ENCODE measurements at regions of chr11 and their contacts with region 1.

Region 1: GRCh38 chr11:18115360-18116127 is 9.7 kb upstream of the SAAL1 start:
- DNase-seq: peak; percentile 78

Region 2: GRCh38 chr11:18027475-18027874 is 88.1 kb before region 1 on chr11:
- CTCF ChIA-PET with region 1: no interaction called
- POLR2A ChIA-PET with region 1: no interaction called
- DNase-seq: no peak

Region 3: GRCh38 chr11:18203723-18204122 is 88.2 kb after region 1 on chr11:
- CTCF ChIA-PET with region 1: interaction called, 19 read pairs
- POLR2A ChIA-PET with region 1: no interaction called
- DNase-seq: peak; percentile 69

Region 4: DNA sequence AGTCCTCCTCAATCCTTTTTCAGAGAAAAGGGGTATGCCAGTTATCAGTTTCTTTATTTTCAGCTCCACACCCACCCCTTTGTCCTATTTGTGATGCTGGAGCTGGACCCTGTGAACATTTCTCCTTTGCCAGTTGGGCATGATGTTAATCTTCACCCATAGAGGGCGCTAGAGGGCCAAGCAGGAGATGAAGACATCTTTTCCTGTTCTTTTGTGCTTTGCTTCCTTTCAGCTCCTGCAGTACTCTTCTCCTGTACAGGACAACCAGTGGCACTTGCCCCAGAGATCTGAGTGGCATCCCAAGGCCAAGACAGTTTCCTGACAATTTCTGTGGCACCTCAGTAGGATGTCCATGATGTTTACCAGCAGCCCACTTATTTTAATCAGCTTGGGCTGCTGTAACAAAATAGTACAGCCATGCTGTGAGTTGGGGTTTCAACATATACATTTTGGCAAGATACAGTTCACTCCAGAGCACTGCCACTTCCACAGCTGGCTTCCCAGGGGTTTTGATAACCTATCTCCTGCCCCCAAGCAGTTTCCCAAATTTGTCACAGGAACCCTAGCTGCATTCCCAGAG is 128.3 kb after region 1 on chr11:
- CTCF ChIA-PET with region 1: interaction called, 17 read pairs
- POLR2A ChIA-PET with region 1: no interaction called
- DNase-seq: peak; percentile 71

Region 5: GRCh38 chr11:18492888-18493287 is 377.3 kb after region 1 on chr11:
- CTCF ChIA-PET with region 1: no interaction called
- POLR2A ChIA-PET with region 1: no interaction called
- DNase-seq: no peak

Measured in HEK293T (cell line).